GM13976 (cell line): ENCODE measurements at regions of chr20 and their contacts with region 1.

Region 1: GRCh38 chr20:19026121-19026878 is 186.1 kb upstream of the SLC24A3 start:
- DNase-seq: peak; percentile 66
- CTCF ChIP-seq: no peak

Region 2: DNA sequence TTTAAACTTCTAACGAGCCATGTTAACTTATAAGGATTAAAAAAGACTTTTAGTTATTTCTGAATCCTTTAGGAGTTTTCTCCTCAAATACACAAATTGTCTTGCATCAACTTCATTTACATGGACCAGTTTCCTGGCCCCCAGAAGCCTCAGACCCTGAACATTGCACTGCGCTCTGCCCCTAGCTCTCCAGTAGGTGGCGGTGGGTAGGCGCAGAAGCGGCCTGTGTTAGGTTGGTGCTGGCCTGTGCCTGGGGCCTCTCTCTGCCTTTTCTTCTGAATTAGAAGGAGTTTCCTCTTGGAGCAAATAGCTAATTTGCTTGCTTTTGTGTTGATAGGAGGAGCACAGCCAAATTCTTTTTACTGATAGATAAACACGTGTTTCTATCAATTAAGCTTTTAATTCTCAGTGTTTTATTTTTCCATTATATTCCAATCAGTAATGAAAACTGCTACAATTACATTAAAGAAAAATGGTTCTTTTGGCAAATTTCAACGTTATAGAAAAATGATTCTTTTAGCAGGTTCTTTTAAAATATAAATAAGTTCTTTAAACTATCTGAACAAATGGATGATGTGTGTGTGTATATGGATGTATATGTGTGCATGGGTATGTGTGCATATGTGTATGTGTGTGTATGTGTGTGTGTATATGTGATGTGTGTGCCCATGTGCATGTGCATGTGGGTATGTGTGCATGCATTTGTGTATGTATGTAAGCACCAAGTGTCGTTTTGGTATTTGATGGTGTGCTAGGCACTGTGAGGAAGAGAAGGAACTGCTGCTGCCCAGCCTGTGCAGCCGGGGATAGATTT is 393.9 kb before region 1 on chr20:
- in situ Hi-C with region 1: loop called (anchors 25 kb)
- DNase-seq: peak; percentile 68
- CTCF ChIP-seq: peak; percentile 97

Region 3: GRCh38 chr20:18857640-18858039 is 168.7 kb before region 1 on chr20:
- in situ Hi-C with region 1: no loop called
- DNase-seq: no peak
- CTCF ChIP-seq: no peak